Ovary (tissue), 10 donors: ENCODE measurements at regions of chr3 and their contacts with region 1.

Region 1: GRCh38 chr3:171809821-171810628 is at the start of gene PLD1:
- DNase-seq: peak; percentile 88 to 93 (median 90)
- H3K4me3 ChIP-seq: peak within 1 kb of the TSS; percentile 68
- H3K27ac ChIP-seq: peak within 1 kb of the TSS; percentile 70 to 94
- H3K4me1 ChIP-seq: peaks cover 14% of the 10 kb centered on the region
- H3K27me3 ChIP-seq: no peaks in the 10 kb centered on the region
- CTCF ChIP-seq: peak in 1 of 3 donors; percentile 28
- EP300 ChIP-seq: peak; percentile 38
- POLR2A ChIP-seq: peak; percentile 58
- total RNA-seq, gene PLD1: 26.1 to 125 (median 55.2) TPM

Region 2: GRCh38 chr3:171772427-171773056 is 37.5 kb before region 1 on chr3:
- intact Hi-C with region 1: loop called in 2 of 4 experiments (anchors 5 kb)
- DNase-seq: peak; percentile 59 to 79 (median 68)
- H3K4me3 ChIP-seq: no peak overlapping the region
- H3K27ac ChIP-seq: peak overlapping the region in 1 of 2 donors; percentile 76
- H3K4me1 ChIP-seq: peaks cover 7% of the 10 kb centered on the region
- H3K27me3 ChIP-seq: no peaks in the 10 kb centered on the region
- CTCF ChIP-seq: peak; percentile 57 to 66 (median 63)
- EP300 ChIP-seq: no peak
- POLR2A ChIP-seq: no peak

Region 3: GRCh38 chr3:172447611-172448579 is 637.9 kb after region 1 on chr3 and contains the start of gene GHSR:
- intact Hi-C with region 1: no loop called
- DNase-seq: no peak
- H3K4me3 ChIP-seq: no peak within 1 kb of the TSS
- H3K27ac ChIP-seq: no peak within 1 kb of the TSS
- H3K4me1 ChIP-seq: peaks cover 2% of the 10 kb centered on the region
- H3K27me3 ChIP-seq: no peaks in the 10 kb centered on the region
- CTCF ChIP-seq: no peak
- EP300 ChIP-seq: no peak
- POLR2A ChIP-seq: no peak
- total RNA-seq, gene GHSR: not detected